Panc1 (cell line): ENCODE measurements at regions of chr1 and their contacts with region 1.

Region 1: DNA sequence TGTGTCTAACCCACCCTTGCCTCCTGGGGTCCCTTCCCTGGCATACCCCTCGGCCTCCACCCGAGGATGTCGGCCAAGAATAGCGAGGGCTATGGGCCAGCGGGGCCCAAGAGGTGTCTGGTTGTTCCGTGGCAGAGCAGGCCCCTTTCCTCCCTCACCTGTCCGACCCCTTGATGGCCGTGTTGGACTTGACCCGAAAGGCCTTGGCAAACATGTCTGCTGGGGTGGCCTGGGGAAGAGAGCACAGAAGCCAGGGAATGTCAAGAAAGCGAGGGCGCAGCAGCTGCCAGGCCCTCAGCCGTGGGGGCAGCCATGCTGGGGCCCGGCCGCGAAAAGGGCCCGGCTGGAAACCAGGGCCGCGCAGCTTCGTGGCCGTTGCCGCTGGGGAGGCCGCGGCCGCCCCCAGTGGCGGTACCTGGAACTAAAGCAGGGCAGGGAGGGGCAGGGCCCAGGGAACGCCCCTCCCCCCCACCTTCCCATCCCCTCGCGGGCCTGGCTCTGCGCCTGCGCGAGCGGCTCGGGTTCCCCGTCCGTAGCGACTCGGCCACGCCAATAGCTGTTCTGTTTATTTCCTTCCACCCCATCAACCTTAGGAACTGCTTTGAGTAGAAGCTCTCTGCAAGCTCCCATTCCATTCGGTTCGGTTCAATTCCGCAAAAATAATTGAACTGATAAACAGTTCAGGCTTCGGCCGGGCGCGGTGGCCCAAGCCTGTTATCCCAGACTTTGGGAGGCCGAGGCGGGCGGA is at the start of gene EIF2D:
- DNase-seq: peak; percentile 66
- ATAC-seq: peak; percentile 98
- H3K4me3 ChIP-seq: peak within 1 kb of the TSS; percentile 89
- H3K27ac ChIP-seq: peak within 1 kb of the TSS; percentile 95
- H3K4me1 ChIP-seq: 0 out of 2 replicates have a peak, but pooled peaks cover 5% of the 10 kb centered on the region
- H3K27me3 ChIP-seq: no peaks in the 10 kb centered on the region; the same call in 1 of the 2 replicates
- CTCF ChIP-seq: peak; percentile 99
- total RNA-seq, gene EIF2D: 28.7 TPM

Region 2: GRCh38 chr1:206489980-206490770 is 122.1 kb before region 1 on chr1:
- CTCF ChIA-PET with region 1: interaction called, 16 read pairs
- POLR2A ChIA-PET with region 1: no interaction called
- in situ Hi-C with region 1: no loop called
- intact Hi-C with region 1: no loop called
- DNase-seq: peak; percentile 33
- ATAC-seq: peak; percentile 96
- H3K4me3 ChIP-seq: no peak overlapping the region
- H3K27ac ChIP-seq: no peak overlapping the region
- H3K4me1 ChIP-seq: no peaks in the 10 kb centered on the region
- H3K27me3 ChIP-seq: no peaks in the 10 kb centered on the region
- CTCF ChIP-seq: peak; percentile 97

Region 3: GRCh38 chr1:206544562-206545257 is 67.6 kb before region 1 on chr1:
- CTCF ChIA-PET with region 1: interaction called, 12 read pairs
- POLR2A ChIA-PET with region 1: no interaction called
- in situ Hi-C with region 1: no loop called
- intact Hi-C with region 1: no loop called
- DNase-seq: peak; percentile 28
- ATAC-seq: peak; percentile 91
- H3K4me3 ChIP-seq: no peak overlapping the region
- H3K27ac ChIP-seq: no peak overlapping the region
- H3K4me1 ChIP-seq: no peaks in the 10 kb centered on the region
- H3K27me3 ChIP-seq: peaks cover 2% of the 10 kb centered on the region; the same call in 1 of the 2 replicates
- CTCF ChIP-seq: peak; percentile 95

Region 4: GRCh38 chr1:206556750-206557635 is 55.3 kb before region 1 on chr1:
- CTCF ChIA-PET with region 1: interaction called, 4 read pairs
- POLR2A ChIA-PET with region 1: interaction called, 13 read pairs
- in situ Hi-C with region 1: no loop called
- intact Hi-C with region 1: no loop called
- DNase-seq: no peak
- ATAC-seq: peak; percentile 77
- H3K4me3 ChIP-seq: peak overlapping the region; percentile 45
- H3K27ac ChIP-seq: no peak overlapping the region
- H3K4me1 ChIP-seq: peaks cover 4% of the 10 kb centered on the region; the same call in 1 of the 2 replicates
- H3K27me3 ChIP-seq: peaks cover 4% of the 10 kb centered on the region; the same call in 1 of the 2 replicates
- CTCF ChIP-seq: no peak